ENCODE measurements at regions of chr2 and their contacts with region 1.

Region 1: DNA sequence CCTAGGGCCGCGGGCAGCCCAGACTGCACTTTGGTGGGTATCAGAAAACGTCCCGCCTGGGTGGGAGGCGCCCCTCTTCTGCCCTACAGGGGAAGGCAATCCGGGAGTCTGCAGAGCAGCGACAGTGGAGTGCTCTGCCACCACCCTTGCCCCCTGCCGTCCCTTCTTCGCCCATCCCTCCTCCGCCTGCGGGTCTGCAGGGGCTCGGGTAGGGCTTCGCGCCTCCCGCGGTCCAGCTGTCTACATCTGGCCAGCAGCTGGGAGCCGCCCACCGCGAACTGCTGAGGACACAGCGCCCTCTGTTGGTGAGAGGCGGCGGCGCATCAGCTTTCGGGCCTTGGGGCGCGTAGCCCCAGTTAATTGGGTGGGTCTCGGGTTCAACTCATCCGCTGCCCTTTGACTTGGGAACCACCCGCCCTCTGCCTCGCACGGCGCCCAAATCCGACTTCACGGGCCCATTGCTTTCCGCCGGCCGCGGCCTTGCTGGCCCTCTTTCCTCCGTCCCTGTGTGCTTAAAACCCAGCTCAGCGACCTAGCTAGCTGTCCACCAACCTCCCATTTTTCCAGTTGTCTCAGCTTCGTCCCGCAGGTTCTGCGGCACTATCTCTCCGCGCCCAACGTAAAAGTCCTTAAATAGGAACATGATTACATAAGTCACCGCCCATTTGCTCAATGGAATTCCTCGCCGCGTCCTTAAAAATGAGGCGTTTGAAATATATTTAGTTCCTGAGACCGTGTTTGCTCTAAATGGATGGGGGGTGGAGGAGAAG is 17.6 kb downstream of the WNT10A start:
- DNase-seq: peak; percentile 68 to 99
- H3K4me3 ChIP-seq: peak overlapping the region in 1 of 4 experiments; percentile 54; a peak in 2 of 8 replicates
- H3K27ac ChIP-seq: no peak overlapping the region
- H3K4me1 ChIP-seq: peaks cover 3 to 35% (median 13%) of the 10 kb centered on the region in 4 experiments
- H3K27me3 ChIP-seq: peaks cover 64 to 81% (median 72%) of the 10 kb centered on the region in 4 experiments
- CTCF ChIP-seq: peak in 2 of 3 experiments; percentile 96 to 97; a peak in 3 of 4 replicates
- EP300 ChIP-seq: no peak
- POLR2A ChIP-seq: no peak
- RAD21 ChIP-seq: peak; percentile 82 to 92

Region 2: GRCh38 chr2:218860950-218861381 is 37.3 kb before region 1 on chr2:
- CTCF ChIA-PET with region 1: interaction called, 22 read pairs
- POLR2A ChIA-PET with region 1: interaction called, 3 read pairs
- DNase-seq: peak; percentile 80 to 82
- H3K4me3 ChIP-seq: peak overlapping the region in 2 of 4 experiments; percentile 19 to 53; a peak in 3 of 8 replicates
- H3K27ac ChIP-seq: no peak overlapping the region
- H3K4me1 ChIP-seq: peaks cover 6 to 33% (median 17%) of the 10 kb centered on the region in 4 experiments
- H3K27me3 ChIP-seq: peaks cover 67 to 94% (median 90%) of the 10 kb centered on the region in 4 experiments
- CTCF ChIP-seq: no peak
- EP300 ChIP-seq: no peak
- POLR2A ChIP-seq: no peak
- RAD21 ChIP-seq: no peak

Region 3: GRCh38 chr2:218908721-218909619 is 10.7 kb after region 1 on chr2:
- CTCF ChIA-PET with region 1: interaction called, 66 read pairs
- POLR2A ChIA-PET with region 1: interaction called, 10 read pairs
- DNase-seq: peak; percentile 89 to 96
- H3K4me3 ChIP-seq: peak overlapping the region; percentile 75 to 90 (median 82)
- H3K27ac ChIP-seq: peak overlapping the region; percentile 73; the same call in 1 of the 2 replicates
- H3K4me1 ChIP-seq: peaks cover 0 to 4% (median 1%) of the 10 kb centered on the region in 4 experiments; a peak in 2 of 7 replicates
- H3K27me3 ChIP-seq: peaks cover 2 to 28% (median 17%) of the 10 kb centered on the region in 4 experiments; a peak in 6 of 7 replicates
- CTCF ChIP-seq: no peak
- EP300 ChIP-seq: no peak
- POLR2A ChIP-seq: peak; percentile 61 to 95
- RAD21 ChIP-seq: no peak

Region 4: DNA sequence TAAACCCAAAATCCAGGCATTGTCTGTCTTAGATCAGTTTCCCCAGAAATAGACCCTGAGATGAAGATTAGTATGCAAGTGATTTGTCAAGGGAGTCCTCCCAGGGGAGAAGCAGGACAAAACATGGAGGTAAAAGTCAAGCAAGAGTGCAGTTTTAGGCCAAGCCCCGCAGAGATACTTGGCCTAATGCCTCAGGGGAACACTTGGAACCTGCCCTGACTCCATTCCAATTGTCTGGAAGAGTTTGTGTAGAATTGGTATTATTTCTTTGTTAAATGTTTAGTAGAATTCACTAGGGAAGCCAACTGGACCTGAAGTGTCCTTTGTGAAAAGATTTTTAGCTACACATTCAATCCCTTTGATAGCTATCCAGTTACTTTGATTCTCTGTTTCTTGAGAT is 16.7 kb after region 1 on chr2:
- CTCF ChIA-PET with region 1: interaction called, 66 read pairs
- POLR2A ChIA-PET with region 1: interaction called, 4 read pairs
- DNase-seq: no peak
- H3K4me3 ChIP-seq: no peak overlapping the region
- H3K27ac ChIP-seq: no peak overlapping the region
- H3K4me1 ChIP-seq: no peaks in the 10 kb centered on the region
- H3K27me3 ChIP-seq: no peaks in the 10 kb centered on the region
- CTCF ChIP-seq: no peak
- EP300 ChIP-seq: no peak
- POLR2A ChIP-seq: no peak
- RAD21 ChIP-seq: no peak

Region 5: DNA sequence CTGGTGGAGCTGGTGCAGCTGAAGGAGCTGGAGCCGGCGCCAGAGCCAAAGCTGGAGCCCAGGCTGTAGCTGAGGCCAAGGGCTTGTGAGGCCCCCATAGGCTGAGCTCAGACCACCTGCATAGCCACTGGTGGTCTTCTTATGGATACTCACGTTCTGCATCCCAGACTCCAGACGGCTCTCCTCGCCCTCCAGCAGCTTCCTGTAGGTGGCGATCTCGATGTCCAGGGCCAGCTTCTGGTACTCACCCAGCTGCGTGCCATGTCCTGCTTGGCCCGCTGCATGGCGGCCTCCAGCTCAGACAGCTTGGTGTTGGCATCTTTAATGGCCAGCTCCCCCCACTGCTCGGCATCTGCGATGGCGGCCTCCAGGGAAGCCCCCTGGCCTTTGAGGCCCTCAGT is 55.2 kb after region 1 on chr2:
- CTCF ChIA-PET with region 1: interaction called, 50 read pairs
- POLR2A ChIA-PET with region 1: interaction called, 3 read pairs
- DNase-seq: peak in 1 of 2 experiments; percentile 69
- H3K4me3 ChIP-seq: no peak overlapping the region
- H3K27ac ChIP-seq: no peak overlapping the region
- H3K4me1 ChIP-seq: peaks cover 0 to under 1% (median 0%) of the 10 kb centered on the region in 4 experiments; a peak in 1 of 7 replicates
- H3K27me3 ChIP-seq: peaks cover 4 to 29% (median 15%) of the 10 kb centered on the region in 4 experiments
- CTCF ChIP-seq: peak; percentile 57 to 71 (median 65)
- EP300 ChIP-seq: no peak
- POLR2A ChIP-seq: no peak
- RAD21 ChIP-seq: peak in 1 of 2 experiments; percentile 19; a peak in 2 of 4 replicates

Region 6: DNA sequence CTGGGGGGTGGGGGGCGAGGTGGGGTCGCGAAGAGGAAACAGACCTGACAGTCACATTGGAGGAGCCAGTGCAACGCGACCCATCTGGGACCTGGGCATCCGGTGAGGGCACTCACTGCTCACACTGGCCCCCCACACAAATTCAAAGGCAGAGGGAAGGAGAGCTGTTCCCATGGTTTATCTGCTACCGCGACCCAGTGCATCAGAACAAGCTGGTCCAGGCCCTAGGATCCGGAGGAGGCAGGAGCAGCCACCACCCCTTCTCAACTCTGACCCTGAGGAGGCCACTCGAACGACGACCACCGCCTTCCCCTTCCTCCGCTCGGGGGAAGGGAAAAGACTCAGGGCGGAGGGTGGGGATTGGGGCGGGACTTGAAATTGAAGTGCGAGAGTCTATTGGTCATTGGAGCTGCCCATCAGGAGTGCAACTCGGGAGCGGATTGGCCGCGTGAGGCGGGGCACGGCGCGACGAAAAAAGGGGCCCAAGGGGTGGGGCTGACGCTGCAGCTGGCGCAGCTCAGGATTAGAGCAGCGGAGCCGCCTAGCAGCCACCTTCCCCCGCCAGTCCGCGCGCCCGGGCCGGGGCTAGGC is 60.9 kb after region 1 on chr2 and contains the start of gene CDK5R2:
- CTCF ChIA-PET with region 1: interaction called, 50 read pairs
- POLR2A ChIA-PET with region 1: interaction called, 3 read pairs
- DNase-seq: peak; percentile 74 to 98
- H3K4me3 ChIP-seq: peak within 1 kb of the TSS; percentile 61 to 74 (median 68)
- H3K27ac ChIP-seq: no peak within 1 kb of the TSS
- H3K4me1 ChIP-seq: peaks cover 9 to 29% (median 18%) of the 10 kb centered on the region in 4 experiments
- H3K27me3 ChIP-seq: peaks cover 31 to 69% (median 54%) of the 10 kb centered on the region in 4 experiments
- CTCF ChIP-seq: no peak
- EP300 ChIP-seq: no peak
- POLR2A ChIP-seq: no peak
- RAD21 ChIP-seq: no peak
- total RNA-seq, gene CDK5R2: not detected in 2 replicates

Region 7: GRCh38 chr2:218990052-218990451 is 91.8 kb after region 1 on chr2:
- CTCF ChIA-PET with region 1: interaction called, 11 read pairs
- POLR2A ChIA-PET with region 1: no interaction called
- DNase-seq: no peak
- H3K4me3 ChIP-seq: no peak overlapping the region
- H3K27ac ChIP-seq: no peak overlapping the region
- H3K4me1 ChIP-seq: peaks cover 0 to 17% (median 6%) of the 10 kb centered on the region in 4 experiments; a peak in 6 of 7 replicates
- H3K27me3 ChIP-seq: peaks cover 98 to 100% (median 99%) of the 10 kb centered on the region in 4 experiments
- CTCF ChIP-seq: no peak
- EP300 ChIP-seq: no peak
- POLR2A ChIP-seq: no peak
- RAD21 ChIP-seq: no peak